HAP-1 (cell line): ENCODE measurements at regions of chr2 and their contacts with region 1.

Region 1: DNA sequence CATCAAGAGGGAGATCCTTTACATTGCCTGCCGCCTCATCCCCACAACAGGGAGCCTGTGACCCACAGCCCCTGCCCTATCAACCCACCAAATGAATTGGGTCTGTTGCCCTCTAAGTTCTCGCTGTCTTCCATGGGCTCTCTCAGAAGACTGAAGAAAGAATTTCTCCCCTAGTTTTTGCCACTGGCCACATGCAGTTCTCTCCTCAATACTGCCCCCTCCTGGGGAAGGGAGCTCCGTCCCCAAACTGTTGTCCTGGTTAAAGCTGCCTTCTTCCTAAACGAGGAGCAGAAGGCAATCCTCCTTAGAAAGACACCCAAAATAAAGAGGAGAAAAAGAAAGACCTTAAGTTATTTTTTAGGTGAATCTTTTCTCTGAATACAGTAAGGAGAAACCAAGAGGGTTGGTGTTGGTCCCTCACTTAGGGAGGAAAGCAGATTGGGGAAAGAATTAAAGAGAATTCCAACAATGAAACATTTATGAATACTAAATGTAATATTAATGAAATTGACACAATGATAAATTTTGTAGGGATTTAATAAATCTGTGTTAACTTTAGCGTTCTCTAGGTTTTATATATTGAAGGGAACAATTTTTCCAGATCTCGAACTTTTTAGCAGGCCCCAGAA is 31.1 kb upstream of the SATB2 start:
- DNase-seq: peak; percentile 47 to 85
- H3K4me3 ChIP-seq: no peak overlapping the region
- H3K4me1 ChIP-seq: 0 out of 2 replicates have a peak, but pooled peaks cover 3% of the 10 kb centered on the region
- H3K27me3 ChIP-seq: no peaks in the 10 kb centered on the region

Region 2: GRCh38 chr2:198309673-198310280 is 1179.1 kb before region 1 on chr2:
- in situ Hi-C with region 1: loop called (anchors 25 kb)
- DNase-seq: peak; percentile 27 to 74
- H3K4me3 ChIP-seq: no peak overlapping the region
- H3K4me1 ChIP-seq: peaks cover 8% of the 10 kb centered on the region
- H3K27me3 ChIP-seq: peaks cover 22% of the 10 kb centered on the region

Region 3: DNA sequence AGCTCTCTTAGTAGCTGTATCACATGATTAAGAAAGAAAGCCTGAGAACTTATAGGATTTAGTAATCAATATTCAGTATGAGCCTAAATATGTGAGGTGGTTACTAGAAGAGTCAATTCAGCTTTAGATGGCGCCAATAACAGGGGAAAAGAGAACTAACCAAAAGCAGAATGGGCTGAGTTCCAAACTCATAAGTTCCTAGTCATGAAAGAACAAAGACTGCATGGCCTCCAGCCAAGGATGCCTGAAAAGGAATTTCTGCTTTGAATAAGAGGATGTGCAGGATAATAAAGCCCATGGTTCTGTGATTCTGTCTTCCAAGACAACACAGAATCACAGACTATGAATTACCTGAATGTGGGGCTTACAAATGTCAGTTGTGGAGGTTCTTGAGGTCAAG is 227.6 kb before region 1 on chr2:
- in situ Hi-C with region 1: no loop called
- DNase-seq: peak; percentile 13 to 57
- H3K4me3 ChIP-seq: no peak overlapping the region
- H3K4me1 ChIP-seq: no peaks in the 10 kb centered on the region
- H3K27me3 ChIP-seq: no peaks in the 10 kb centered on the region

Region 4: DNA sequence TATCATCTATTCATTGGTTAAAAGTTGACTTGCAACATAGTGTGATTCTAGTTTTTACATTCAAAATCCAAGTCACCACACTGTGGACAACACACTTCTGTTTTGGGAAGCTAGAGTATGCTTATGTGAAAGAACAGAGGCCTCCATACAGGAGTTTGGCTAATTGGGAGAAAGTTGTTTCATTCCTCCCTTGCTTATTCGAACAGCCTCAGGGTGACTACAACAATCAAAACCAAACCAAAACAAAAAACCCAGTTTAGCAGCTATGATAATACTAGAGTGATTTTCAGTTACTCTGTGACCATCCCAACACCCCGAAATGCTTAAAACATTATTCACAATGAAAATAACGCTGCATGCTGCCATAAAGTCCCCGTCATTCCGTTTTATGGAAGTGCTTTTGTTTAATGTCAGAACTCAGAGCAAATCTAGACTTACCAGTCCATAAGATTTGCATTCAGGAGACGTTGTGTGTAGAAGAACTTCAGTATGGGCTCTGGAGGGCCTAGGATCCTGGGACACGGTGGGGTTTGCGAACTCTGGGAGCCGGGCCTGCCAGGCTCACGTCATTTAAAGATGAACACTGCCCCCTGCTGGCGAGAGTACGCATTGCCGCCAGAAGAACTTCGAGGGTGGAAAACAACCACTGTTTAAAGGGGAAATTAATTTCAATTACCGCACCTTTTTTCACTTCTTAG is 250.7 kb after region 1 on chr2:
- in situ Hi-C with region 1: loop called (anchors 25 kb)
- DNase-seq: peak; percentile 49 to 88
- H3K4me3 ChIP-seq: no peak overlapping the region
- H3K4me1 ChIP-seq: peaks cover 14% of the 10 kb centered on the region
- H3K27me3 ChIP-seq: peaks cover 9% of the 10 kb centered on the region; the same call in 1 of the 2 replicates

Region 5: GRCh38 chr2:200050921-200051610 is 562.2 kb after region 1 on chr2:
- in situ Hi-C with region 1: no loop called
- DNase-seq: no peak
- H3K4me3 ChIP-seq: no peak overlapping the region
- H3K4me1 ChIP-seq: no peaks in the 10 kb centered on the region
- H3K27me3 ChIP-seq: peaks cover 11% of the 10 kb centered on the region